ENCODE measurements at regions of chr3 and their contacts with region 1.

Region 1: GRCh38 chr3:105518806-105519418 is 152.2 kb downstream of the ALCAM start:
- DNase-seq: peak; percentile 38
- H3K4me3 ChIP-seq: no peak overlapping the region
- H3K27ac ChIP-seq: no peak overlapping the region
- H3K27me3 ChIP-seq: no peaks in the 10 kb centered on the region
- CTCF ChIP-seq: peak; percentile 64

Region 2: DNA sequence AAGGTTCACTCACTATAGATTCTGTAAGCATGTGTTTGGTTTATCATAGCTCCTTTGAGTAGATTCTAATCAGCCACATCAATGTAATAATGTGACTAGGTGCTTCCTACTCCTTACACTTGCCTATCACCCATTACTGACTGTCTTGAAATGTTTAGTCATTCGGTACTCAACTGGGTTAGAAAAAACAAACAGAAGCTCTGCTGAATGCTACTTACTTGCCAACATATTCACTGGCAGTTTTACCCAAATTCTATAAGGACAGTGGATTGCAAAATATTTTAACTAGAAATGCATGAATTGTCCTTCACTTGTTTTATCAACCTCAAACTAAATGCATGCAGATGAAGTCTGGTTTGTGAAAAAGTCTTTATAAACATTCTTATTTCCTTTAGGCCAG is 504.3 kb before region 1 on chr3:
- CTCF ChIA-PET with region 1: no interaction called
- POLR2A ChIA-PET with region 1: no interaction called
- DNase-seq: no peak
- H3K4me3 ChIP-seq: no peak overlapping the region
- H3K27ac ChIP-seq: no peak overlapping the region
- H3K27me3 ChIP-seq: no peaks in the 10 kb centered on the region
- CTCF ChIP-seq: no peak

Region 3: GRCh38 chr3:105366326-105367062 is 152.4 kb before region 1 on chr3 and contains the start of gene ALCAM:
- CTCF ChIA-PET with region 1: interaction called, 82 read pairs
- POLR2A ChIA-PET with region 1: no interaction called
- DNase-seq: peak; percentile 98
- H3K4me3 ChIP-seq: peak within 1 kb of the TSS; percentile 96
- H3K27ac ChIP-seq: peak within 1 kb of the TSS; percentile 94
- H3K27me3 ChIP-seq: no peaks in the 10 kb centered on the region
- CTCF ChIP-seq: peak; percentile 70
- polyA plus RNA-seq, gene ALCAM: 198 and 275 TPM in 2 replicates

Region 4: DNA sequence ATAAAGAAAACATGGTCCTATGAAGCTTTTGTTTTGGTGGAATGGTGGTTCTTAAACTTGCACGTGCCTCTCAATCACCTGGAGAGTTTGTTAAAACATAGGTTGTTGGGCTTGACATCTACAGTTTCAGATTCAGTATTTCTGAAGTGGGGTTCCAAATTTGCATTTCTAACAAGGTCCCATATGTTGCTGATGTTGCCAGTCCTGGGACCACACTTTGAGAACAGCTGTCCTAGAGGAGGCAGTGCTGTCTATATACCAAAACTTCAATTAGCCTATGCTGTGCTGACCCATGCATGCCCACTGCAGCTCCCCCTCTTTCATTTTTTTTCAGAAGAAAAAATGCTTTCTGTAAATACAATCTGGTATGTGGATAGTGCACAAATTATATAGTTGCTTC is 120.9 kb before region 1 on chr3:
- CTCF ChIA-PET with region 1: interaction called, 12 read pairs
- POLR2A ChIA-PET with region 1: no interaction called
- DNase-seq: no peak
- H3K4me3 ChIP-seq: no peak overlapping the region
- H3K27ac ChIP-seq: no peak overlapping the region
- H3K27me3 ChIP-seq: no peaks in the 10 kb centered on the region
- CTCF ChIP-seq: no peak

Region 5: DNA sequence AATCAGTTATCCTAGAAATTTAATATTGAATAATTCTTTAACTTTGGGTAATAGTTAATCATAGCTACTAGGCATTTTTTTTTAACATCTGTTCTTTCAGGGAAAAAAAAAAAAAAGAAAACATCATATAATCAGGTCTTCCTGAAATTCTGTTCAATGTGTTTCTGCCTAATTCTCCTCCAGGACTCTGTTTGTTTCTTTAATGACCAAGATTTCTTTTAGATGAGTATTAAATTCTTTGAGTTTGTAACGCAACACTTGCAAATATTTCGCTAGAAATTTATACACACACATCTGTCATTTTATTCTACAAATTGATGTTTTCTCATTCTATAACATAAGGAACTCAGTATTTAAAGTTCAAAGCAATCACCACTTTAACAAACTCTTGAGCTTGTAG is 95.5 kb before region 1 on chr3:
- CTCF ChIA-PET with region 1: no interaction called
- POLR2A ChIA-PET with region 1: interaction called, 10 read pairs
- DNase-seq: no peak
- H3K4me3 ChIP-seq: no peak overlapping the region
- H3K27ac ChIP-seq: no peak overlapping the region
- H3K27me3 ChIP-seq: no peaks in the 10 kb centered on the region
- CTCF ChIP-seq: no peak

Region 6: DNA sequence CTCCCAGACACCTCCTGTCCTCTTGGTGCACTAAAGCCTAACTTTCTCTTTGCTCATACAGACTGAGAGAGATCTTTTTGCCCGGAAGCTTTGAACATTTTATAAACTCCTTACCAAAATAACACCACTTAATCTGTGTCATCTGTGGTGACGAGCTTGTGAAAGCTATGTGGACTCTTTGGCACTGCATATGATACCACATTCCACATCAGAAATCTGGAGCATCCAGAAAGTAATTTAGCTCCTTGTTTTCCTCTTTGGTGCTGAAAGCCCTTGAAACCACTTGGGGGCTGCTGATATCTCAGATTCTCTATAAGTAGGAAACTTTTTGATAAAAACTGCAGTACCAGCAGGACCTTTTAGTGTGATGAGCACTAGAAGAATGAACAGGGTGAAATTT is 23.9 kb before region 1 on chr3:
- CTCF ChIA-PET with region 1: interaction called, 11 read pairs
- POLR2A ChIA-PET with region 1: no interaction called
- DNase-seq: no peak
- H3K4me3 ChIP-seq: no peak overlapping the region
- H3K27ac ChIP-seq: no peak overlapping the region
- H3K27me3 ChIP-seq: no peaks in the 10 kb centered on the region
- CTCF ChIP-seq: 0 out of 2 replicates have a peak, but pooled peaks have one; percentile 2

Region 7: GRCh38 chr3:105505170-105505569 is 13.7 kb before region 1 on chr3:
- CTCF ChIA-PET with region 1: interaction called, 34 read pairs
- POLR2A ChIA-PET with region 1: no interaction called
- DNase-seq: no peak
- H3K4me3 ChIP-seq: no peak overlapping the region
- H3K27ac ChIP-seq: no peak overlapping the region
- H3K27me3 ChIP-seq: no peaks in the 10 kb centered on the region
- CTCF ChIP-seq: no peak

Measured in AG04450 (cell line).